ENCODE measurements at regions of chr15 and their contacts with region 1.

Region 1: GRCh38 chr15:54250326-54250725 is 272.1 kb downstream of the UNC13C start:
- DNase-seq: no peak
- ATAC-seq: no peak
- H3K4me3 ChIP-seq: no peak overlapping the region
- H3K27ac ChIP-seq: no peak overlapping the region
- H3K4me1 ChIP-seq: no peaks in the 10 kb centered on the region
- H3K27me3 ChIP-seq: no peaks in the 10 kb centered on the region
- CTCF ChIP-seq: no peak
- POLR2A ChIP-seq: no peak
- RAD21 ChIP-seq: no peak

Region 2: GRCh38 chr15:54119051-54119450 is 131.3 kb before region 1 on chr15:
- CTCF ChIA-PET with region 1: no interaction called
- POLR2A ChIA-PET with region 1: no interaction called
- RAD21 ChIA-PET with region 1: no interaction called
- intact Hi-C with region 1: no loop called
- DNase-seq: no peak
- ATAC-seq: no peak
- H3K4me3 ChIP-seq: no peak overlapping the region
- H3K27ac ChIP-seq: no peak overlapping the region
- H3K4me1 ChIP-seq: no peaks in the 10 kb centered on the region
- H3K27me3 ChIP-seq: no peaks in the 10 kb centered on the region
- CTCF ChIP-seq: no peak
- POLR2A ChIP-seq: no peak
- RAD21 ChIP-seq: no peak

Region 3: DNA sequence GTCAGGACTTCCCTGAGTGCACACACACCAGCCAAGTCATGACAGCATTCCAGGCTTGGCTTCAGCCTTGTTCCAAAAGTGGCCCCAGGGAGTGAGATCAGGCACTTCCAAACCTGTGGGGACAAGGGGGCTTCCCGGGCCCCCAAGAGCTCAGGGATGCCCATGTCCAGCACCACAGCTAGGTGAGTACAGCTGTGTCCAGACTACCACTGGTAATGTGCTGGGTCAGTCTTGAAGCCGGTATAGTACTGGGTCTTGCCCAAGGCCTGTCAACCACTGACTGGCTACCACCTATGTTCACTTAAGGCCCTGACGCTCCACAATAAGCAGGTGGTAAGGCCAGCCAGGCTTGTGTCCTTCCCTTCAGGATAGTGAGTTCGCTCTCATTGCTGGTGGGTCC is 22.8 kb before region 1 on chr15:
- CTCF ChIA-PET with region 1: no interaction called
- POLR2A ChIA-PET with region 1: no interaction called
- RAD21 ChIA-PET with region 1: no interaction called
- intact Hi-C with region 1: loop called (anchors 1 kb)
- DNase-seq: no peak
- ATAC-seq: no peak
- H3K4me3 ChIP-seq: no peak overlapping the region
- H3K27ac ChIP-seq: no peak overlapping the region
- H3K4me1 ChIP-seq: no peaks in the 10 kb centered on the region
- H3K27me3 ChIP-seq: no peaks in the 10 kb centered on the region
- CTCF ChIP-seq: no peak
- POLR2A ChIP-seq: no peak
- RAD21 ChIP-seq: no peak

Region 4: DNA sequence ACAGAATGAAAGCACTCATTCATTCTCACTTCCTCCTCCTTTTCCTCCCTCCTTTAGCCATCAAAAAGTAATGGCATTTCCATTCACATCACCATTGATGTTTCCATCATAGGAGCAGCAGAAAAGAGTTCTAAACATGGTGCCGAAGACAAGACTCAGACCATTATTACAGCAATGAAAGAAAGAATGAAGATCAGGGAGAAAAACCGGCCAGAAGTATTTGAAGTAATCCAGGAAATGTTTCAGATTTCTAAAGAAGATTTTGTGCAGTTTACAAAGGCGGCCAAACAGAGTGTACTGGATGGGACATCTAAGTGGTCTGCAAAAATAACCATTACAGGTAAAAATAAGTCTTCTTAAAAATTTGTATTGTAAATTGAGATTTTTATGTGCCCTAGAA is 13.7 kb after region 1 on chr15:
- CTCF ChIA-PET with region 1: no interaction called
- POLR2A ChIA-PET with region 1: no interaction called
- RAD21 ChIA-PET with region 1: no interaction called
- intact Hi-C with region 1: no loop called
- DNase-seq: no peak
- ATAC-seq: no peak
- H3K4me3 ChIP-seq: no peak overlapping the region
- H3K27ac ChIP-seq: no peak overlapping the region
- H3K4me1 ChIP-seq: no peaks in the 10 kb centered on the region
- H3K27me3 ChIP-seq: no peaks in the 10 kb centered on the region
- CTCF ChIP-seq: no peak
- POLR2A ChIP-seq: no peak
- RAD21 ChIP-seq: no peak